IMR-90 (cell line): ENCODE measurements at regions of chr3 and their contacts with region 1.

Region 1: DNA sequence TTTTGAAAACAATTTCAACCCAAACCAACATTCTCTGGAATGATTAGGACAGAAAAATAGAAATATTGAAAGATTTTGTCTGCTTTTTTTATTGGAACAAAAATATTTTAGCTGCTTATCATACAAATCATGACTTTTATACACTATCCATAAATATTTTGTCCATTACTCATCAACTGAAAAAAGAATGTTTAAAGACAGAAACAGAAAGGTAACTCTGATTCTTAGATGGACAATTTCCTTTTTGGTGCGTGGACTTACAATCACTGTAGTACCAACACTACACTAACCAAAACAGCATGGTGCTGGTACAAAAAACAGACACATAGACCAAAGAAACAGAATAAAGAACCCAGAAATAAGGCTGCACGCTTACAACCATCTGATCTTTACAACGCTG is 582.8 kb upstream of the CCDC54 start:
- DNase-seq: peak; percentile 8
- ATAC-seq: no peak
- H3K4me3 ChIP-seq: no peak overlapping the region
- H3K27ac ChIP-seq: no peak overlapping the region
- H3K4me1 ChIP-seq: no peaks in the 10 kb centered on the region
- H3K27me3 ChIP-seq: no peaks in the 10 kb centered on the region
- CTCF ChIP-seq: no peak
- POLR2A ChIP-seq: no peak
- RAD21 ChIP-seq: no peak

Region 2: DNA sequence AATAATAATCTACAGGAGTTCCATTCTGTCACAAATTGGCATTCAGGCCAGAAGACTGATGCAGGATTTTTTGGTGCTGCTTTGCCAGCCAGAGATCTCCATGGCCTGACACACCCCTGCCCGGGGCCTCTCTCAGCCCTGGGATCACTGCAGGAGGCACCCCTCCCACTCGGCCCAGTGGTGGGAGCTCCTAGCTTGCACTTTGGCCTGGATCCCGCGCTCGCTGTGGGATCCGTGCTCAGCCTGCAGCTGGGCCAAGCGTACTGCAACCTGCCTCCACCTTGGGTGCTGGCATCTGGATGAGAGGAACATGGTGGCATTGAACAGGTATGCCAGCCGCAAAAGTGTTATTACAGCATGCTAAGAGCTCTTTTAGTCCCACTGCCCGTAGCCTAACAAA is 73.9 kb before region 1 on chr3:
- CTCF ChIA-PET with region 1: no interaction called
- POLR2A ChIA-PET with region 1: no interaction called
- dilution Hi-C with region 1: no loop called
- in situ Hi-C with region 1: no loop called
- intact Hi-C with region 1: no loop called
- DNase-seq: no peak
- ATAC-seq: no peak
- H3K4me3 ChIP-seq: no peak overlapping the region
- H3K27ac ChIP-seq: no peak overlapping the region
- H3K4me1 ChIP-seq: peaks cover 1% of the 10 kb centered on the region; the same call in 1 of the 2 replicates
- H3K27me3 ChIP-seq: no peaks in the 10 kb centered on the region
- CTCF ChIP-seq: no peak
- POLR2A ChIP-seq: no peak
- RAD21 ChIP-seq: no peak

Region 3: GRCh38 chr3:107117922-107118536 is 323.6 kb after region 1 on chr3:
- CTCF ChIA-PET with region 1: no interaction called
- POLR2A ChIA-PET with region 1: interaction called, 16 read pairs
- dilution Hi-C with region 1: no loop called
- in situ Hi-C with region 1: no loop called
- intact Hi-C with region 1: no loop called
- DNase-seq: peak; percentile 80
- ATAC-seq: peak; percentile 92
- H3K4me3 ChIP-seq: no peak overlapping the region
- H3K27ac ChIP-seq: no peak overlapping the region
- H3K4me1 ChIP-seq: peaks cover 2% of the 10 kb centered on the region; the same call in 1 of the 2 replicates
- H3K27me3 ChIP-seq: no peaks in the 10 kb centered on the region; the same call in 1 of the 2 replicates
- CTCF ChIP-seq: peak; percentile 73
- POLR2A ChIP-seq: peak; percentile 36; the same call in 1 of the 2 replicates
- RAD21 ChIP-seq: peak; percentile 88